HCT116 (cell line): ENCODE measurements at regions of chr3 and their contacts with region 1.

Region 1: DNA sequence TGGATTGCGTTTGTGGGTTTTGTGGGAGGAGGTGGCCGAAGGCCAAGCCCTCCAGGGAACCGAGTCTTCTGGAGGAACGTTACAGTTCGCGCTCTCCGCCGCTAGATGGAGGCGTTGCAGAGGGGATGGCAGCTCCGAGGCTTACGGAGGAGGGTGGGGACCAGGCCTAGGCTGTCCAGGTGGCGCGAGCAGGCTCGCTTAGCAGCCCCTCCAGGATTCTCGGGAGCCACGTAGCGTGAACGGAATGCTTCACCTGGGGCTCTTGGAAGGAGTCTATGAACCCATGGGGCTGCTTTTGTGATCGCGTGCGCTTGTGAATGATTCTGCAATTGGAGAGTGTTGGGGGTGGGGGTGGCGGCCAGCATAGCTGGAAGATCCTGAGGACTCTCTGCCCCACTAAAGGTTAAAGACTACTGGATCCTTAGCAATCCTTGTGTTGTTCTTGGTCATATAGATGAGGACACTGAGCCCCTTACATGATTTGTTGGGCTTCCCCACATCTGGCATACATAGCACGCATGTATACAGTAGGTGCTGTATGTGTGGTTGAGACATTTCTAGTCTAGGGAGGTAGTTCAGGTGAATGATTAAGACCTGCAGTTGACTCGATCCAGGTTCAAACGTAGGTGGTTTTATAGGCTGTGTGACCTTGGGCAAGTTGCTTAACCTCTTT is 25.7 kb downstream of the FAM3D start:
- DNase-seq: peak; percentile 50
- ATAC-seq: peak; percentile 98
- H3K4me3 ChIP-seq: no peak overlapping the region
- H3K27ac ChIP-seq: no peak overlapping the region
- H3K4me1 ChIP-seq: peaks cover 0 to 5% of the 10 kb centered on the region in 2 experiments; a peak in 1 of 4 replicates
- H3K27me3 ChIP-seq: no peaks in the 10 kb centered on the region
- CTCF ChIP-seq: peak; percentile 82 to 92 (median 91)
- POLR2A ChIP-seq: no peak
- RAD21 ChIP-seq: peak; percentile 98

Region 2: GRCh38 chr3:58659051-58659675 is 18.3 kb after region 1 on chr3:
- CTCF ChIA-PET with region 1: interaction called, 8 read pairs
- POLR2A ChIA-PET with region 1: no interaction called
- RAD21 ChIA-PET with region 1: no interaction called
- intact Hi-C with region 1: loop called (anchors 1 kb)
- DNase-seq: peak; percentile 24
- ATAC-seq: peak; percentile 88
- H3K4me3 ChIP-seq: no peak overlapping the region
- H3K27ac ChIP-seq: no peak overlapping the region
- H3K4me1 ChIP-seq: peaks cover 0 to 3% of the 10 kb centered on the region in 2 experiments; a peak in 1 of 4 replicates
- H3K27me3 ChIP-seq: peaks cover 14% of the 10 kb centered on the region; the same call in 1 of the 2 replicates
- CTCF ChIP-seq: peak; percentile 50 to 61 (median 51); a peak in 5 of 6 replicates
- POLR2A ChIP-seq: no peak
- RAD21 ChIP-seq: peak; percentile 64

Region 3: DNA sequence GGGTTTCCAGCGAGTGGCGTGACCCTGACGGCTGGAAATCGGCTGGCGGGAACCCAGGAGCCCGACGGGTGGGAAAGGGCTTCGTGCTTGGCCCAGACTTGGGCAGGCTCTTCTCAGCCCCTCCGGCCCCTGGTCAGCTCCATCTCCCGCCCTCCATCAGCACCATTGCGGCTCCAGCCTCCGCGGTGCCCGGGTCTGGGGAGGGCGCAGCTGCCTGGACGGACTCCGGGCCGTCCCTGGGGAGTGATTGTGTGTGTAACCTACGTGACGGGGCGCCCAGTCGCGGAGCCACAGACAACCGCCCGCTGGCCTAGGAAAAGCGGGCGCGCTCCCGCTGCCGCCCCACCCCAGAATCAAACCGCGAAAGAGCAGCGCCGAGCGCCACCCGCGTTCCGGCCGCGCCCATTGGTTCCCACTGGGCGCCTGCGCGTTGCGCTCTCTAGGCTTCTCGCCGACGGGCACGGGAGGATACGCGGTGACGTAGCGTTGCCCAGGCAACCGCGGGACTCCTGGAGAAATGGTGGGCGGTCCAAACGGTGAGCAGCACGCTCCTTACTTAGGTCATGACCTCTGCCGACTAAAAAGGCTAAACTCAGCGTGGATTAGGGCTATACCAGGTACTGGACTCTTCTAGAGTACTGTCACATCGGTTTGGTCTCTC is 409.0 kb after region 1 on chr3 and contains the start of gene CFAP20DC:
- CTCF ChIA-PET with region 1: interaction called, 6 read pairs
- POLR2A ChIA-PET with region 1: no interaction called
- RAD21 ChIA-PET with region 1: no interaction called
- intact Hi-C with region 1: loop called (anchors 5 kb)
- DNase-seq: peak; percentile 85
- ATAC-seq: peak; percentile 98
- H3K4me3 ChIP-seq: peak within 1 kb of the TSS; percentile 63 to 68
- H3K27ac ChIP-seq: peak within 1 kb of the TSS; percentile 42; the same call in 1 of the 2 replicates
- H3K4me1 ChIP-seq: peaks cover 8 to 28% of the 10 kb centered on the region in 2 experiments; a peak in 3 of 4 replicates
- H3K27me3 ChIP-seq: no peaks in the 10 kb centered on the region
- CTCF ChIP-seq: no peak
- POLR2A ChIP-seq: peak; percentile 95
- RAD21 ChIP-seq: no peak
- total RNA-seq, gene CFAP20DC: 2.9 TPM

Region 4: DNA sequence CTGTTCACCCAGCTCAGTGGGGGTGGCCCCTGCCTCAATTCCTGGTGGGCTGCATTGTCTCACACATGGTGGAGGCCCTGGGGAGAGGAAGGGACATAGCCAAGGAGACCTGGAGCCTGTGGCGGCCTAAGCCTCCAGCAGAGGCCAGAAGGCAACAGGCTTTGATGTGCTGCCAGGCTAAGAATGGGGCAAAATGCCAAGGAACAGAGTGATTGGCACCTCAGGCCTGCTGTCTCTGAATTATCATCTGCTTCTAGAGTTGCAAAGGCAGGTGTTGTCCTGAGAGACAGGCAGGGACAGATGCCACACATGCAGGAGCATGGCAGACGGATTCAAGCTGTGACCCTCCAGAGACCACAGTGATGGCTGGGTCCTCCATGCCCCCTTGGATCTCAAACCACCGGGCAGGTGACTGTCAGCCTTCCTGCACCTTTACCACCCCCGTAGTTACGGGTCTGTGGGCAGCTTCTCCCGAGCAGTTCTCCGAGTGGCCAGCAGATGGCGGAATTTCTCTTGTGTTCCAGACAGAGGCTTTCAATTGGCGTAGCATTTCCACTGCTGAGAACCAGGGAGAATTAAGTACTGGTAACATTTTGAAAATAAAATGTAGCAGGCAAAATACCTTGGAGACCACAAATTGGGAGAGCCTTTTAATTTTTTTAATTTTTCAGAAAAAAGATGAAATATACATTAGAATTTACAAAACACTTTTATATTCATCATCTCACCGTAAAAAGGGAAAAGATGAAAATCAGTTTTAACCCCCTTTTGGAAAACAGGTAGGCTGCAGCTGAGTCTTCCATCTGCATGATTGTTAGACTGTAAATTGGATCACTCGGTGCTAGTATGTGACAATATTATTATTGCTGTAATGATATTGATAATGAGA is 934.5 kb after region 1 on chr3:
- CTCF ChIA-PET with region 1: interaction called, 3 read pairs
- POLR2A ChIA-PET with region 1: no interaction called
- RAD21 ChIA-PET with region 1: no interaction called
- intact Hi-C with region 1: loop called (anchors 2 kb)
- DNase-seq: peak; percentile 48
- ATAC-seq: peak; percentile 97
- H3K4me3 ChIP-seq: no peak overlapping the region
- H3K27ac ChIP-seq: no peak overlapping the region
- H3K4me1 ChIP-seq: peaks cover 0 to 3% of the 10 kb centered on the region in 2 experiments; a peak in 2 of 4 replicates
- H3K27me3 ChIP-seq: peaks cover 5% of the 10 kb centered on the region; the same call in 1 of the 2 replicates
- CTCF ChIP-seq: peak; percentile 77 to 95 (median 93)
- POLR2A ChIP-seq: no peak
- RAD21 ChIP-seq: peak; percentile 89